ENCODE measurements at regions of chr5 and their contacts with region 1.

Region 1: GRCh38 chr5:91318724-91319123 is 64.4 kb downstream of the ARRDC3 start:
- DNase-seq: peak in 3 of 9 experiments; percentile 20 to 30 (median 24)
- ATAC-seq: no peak
- H3K4me3 ChIP-seq: no peak overlapping the region
- H3K4me3 Mint-ChIP-seq: no peak overlapping the region
- H3K27ac ChIP-seq: no peak overlapping the region
- H3K27ac Mint-ChIP-seq: no peak overlapping the region
- H3K4me1 ChIP-seq: peaks cover 10% of the 10 kb centered on the region
- H3K4me1 Mint-ChIP-seq: peaks cover 16% of the 10 kb centered on the region
- H3K27me3 ChIP-seq: no peaks in the 10 kb centered on the region
- H3K27me3 Mint-ChIP-seq: no peaks in the 10 kb centered on the region
- CTCF ChIP-seq: no peak

Region 2: GRCh38 chr5:91361055-91361701 is 42.5 kb after region 1 on chr5:
- CTCF ChIA-PET with region 1: no interaction called
- POLR2A ChIA-PET with region 1: interaction called, 3 read pairs
- intact Hi-C with region 1: loop called in 1 of 2 experiments (anchors 5 kb)
- DNase-seq: peak in 2 of 9 experiments; percentile 40 to 56
- ATAC-seq: peak; percentile 44
- H3K4me3 ChIP-seq: no peak overlapping the region
- H3K4me3 Mint-ChIP-seq: no peak overlapping the region
- H3K27ac ChIP-seq: no peak overlapping the region
- H3K27ac Mint-ChIP-seq: peak overlapping the region; percentile 7
- H3K4me1 ChIP-seq: no peaks in the 10 kb centered on the region
- H3K4me1 Mint-ChIP-seq: peaks cover 10% of the 10 kb centered on the region
- H3K27me3 ChIP-seq: no peaks in the 10 kb centered on the region
- H3K27me3 Mint-ChIP-seq: peaks cover 2% of the 10 kb centered on the region
- CTCF ChIP-seq: no peak

Measured in CD8-positive, alpha-beta T cell (primary cell).